Panc1 (cell line): ENCODE measurements at regions of chrX and their contacts with region 1.

Region 1: DNA sequence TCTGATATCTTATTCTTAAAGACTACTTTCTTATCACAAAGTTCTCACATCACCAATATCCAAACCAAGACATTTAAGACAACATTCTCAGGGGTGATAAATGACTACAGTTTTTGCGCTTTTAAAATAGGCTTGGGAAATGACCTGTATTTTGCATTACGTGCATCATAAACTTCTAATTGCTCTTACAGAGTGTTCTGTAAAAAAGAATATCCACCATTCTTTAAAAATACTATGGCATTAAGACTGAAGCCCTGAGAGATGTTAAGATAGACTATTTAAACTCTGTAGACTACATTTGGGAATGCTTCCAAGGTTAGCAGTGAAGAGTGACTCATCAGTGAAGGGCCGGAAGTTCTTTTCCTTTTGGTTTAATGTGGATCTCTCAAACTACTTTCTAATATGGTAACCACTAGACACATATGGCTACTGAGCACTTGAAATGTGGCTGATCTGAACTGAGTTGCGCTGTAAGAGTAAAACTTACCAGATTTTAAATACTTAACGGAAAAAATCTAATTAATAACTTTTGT is 518.8 kb upstream of the FTHL17 start:
- DNase-seq: no peak
- ATAC-seq: no peak
- H3K4me3 ChIP-seq: no peak overlapping the region
- H3K27ac ChIP-seq: no peak overlapping the region
- H3K4me1 ChIP-seq: no peaks in the 10 kb centered on the region
- H3K27me3 ChIP-seq: no peaks in the 10 kb centered on the region
- CTCF ChIP-seq: no peak

Region 2: GRCh38 chrX:31154946-31155345 is 435.7 kb before region 1 on chrX:
- CTCF ChIA-PET with region 1: no interaction called
- POLR2A ChIA-PET with region 1: interaction called, 13 read pairs
- in situ Hi-C with region 1: no loop called
- intact Hi-C with region 1: no loop called
- DNase-seq: no peak
- ATAC-seq: no peak
- H3K4me3 ChIP-seq: no peak overlapping the region
- H3K27ac ChIP-seq: no peak overlapping the region
- H3K4me1 ChIP-seq: no peaks in the 10 kb centered on the region
- H3K27me3 ChIP-seq: no peaks in the 10 kb centered on the region
- CTCF ChIP-seq: no peak